Stomach (tissue), 19 donors: ENCODE measurements at regions of chr10 and their contacts with region 1.

Region 1: GRCh38 chr10:52729271-52730104 is 43.1 kb downstream of the MBL2 start:
- DNase-seq: peak in 1 of 2 donors; percentile 40
- H3K4me3 ChIP-seq: no peak overlapping the region
- H3K27ac ChIP-seq: no peak overlapping the region
- H3K4me1 ChIP-seq: no peaks in the 10 kb centered on the region
- H3K27me3 ChIP-seq: no peaks in the 10 kb centered on the region
- CTCF ChIP-seq: peak in 4 of 7 experiments; percentile 30 to 50 (median 37)
- EP300 ChIP-seq: no peak
- POLR2A ChIP-seq: no peak

Region 2: GRCh38 chr10:52644373-52645186 is 84.9 kb before region 1 on chr10:
- intact Hi-C with region 1: loop called (anchors 10 kb)
- DNase-seq: peak; percentile 40 to 71
- H3K4me3 ChIP-seq: no peak overlapping the region
- H3K27ac ChIP-seq: no peak overlapping the region
- H3K4me1 ChIP-seq: no peaks in the 10 kb centered on the region
- H3K27me3 ChIP-seq: no peaks in the 10 kb centered on the region
- CTCF ChIP-seq: peak in 4 of 7 experiments; percentile 18 to 71 (median 60)
- EP300 ChIP-seq: no peak
- POLR2A ChIP-seq: no peak